Vagina (tissue), 2 donors: ENCODE measurements at regions of chr4 and their contacts with region 1.

Region 1: GRCh38 chr4:77075869-77076799 is at the start of gene CCNI:
- DNase-seq: peak in 1 of 2 donors; percentile 98
- H3K4me3 ChIP-seq: peak within 1 kb of the TSS; percentile 88 to 98
- H3K27ac ChIP-seq: peak within 1 kb of the TSS; percentile 100
- H3K4me1 ChIP-seq: peaks cover 47% of the 10 kb centered on the region
- H3K27me3 ChIP-seq: no peaks in the 10 kb centered on the region
- CTCF ChIP-seq: no peak
- POLR2A ChIP-seq: peak in 1 of 2 donors; percentile 82
- total RNA-seq, gene CCNI: 206 TPM

Region 2: GRCh38 chr4:77156533-77156911 is 80.4 kb after region 1 on chr4:
- intact Hi-C with region 1: loop called (anchors 2 kb)
- DNase-seq: peak; percentile 99
- H3K4me3 ChIP-seq: peak overlapping the region; percentile 88 to 91
- H3K27ac ChIP-seq: peak overlapping the region; percentile 96
- H3K4me1 ChIP-seq: peaks cover 28% of the 10 kb centered on the region
- H3K27me3 ChIP-seq: no peaks in the 10 kb centered on the region
- CTCF ChIP-seq: no peak
- POLR2A ChIP-seq: no peak